IMR-90 (cell line): ENCODE measurements at regions of chr16 and their contacts with region 1.

Region 1: DNA sequence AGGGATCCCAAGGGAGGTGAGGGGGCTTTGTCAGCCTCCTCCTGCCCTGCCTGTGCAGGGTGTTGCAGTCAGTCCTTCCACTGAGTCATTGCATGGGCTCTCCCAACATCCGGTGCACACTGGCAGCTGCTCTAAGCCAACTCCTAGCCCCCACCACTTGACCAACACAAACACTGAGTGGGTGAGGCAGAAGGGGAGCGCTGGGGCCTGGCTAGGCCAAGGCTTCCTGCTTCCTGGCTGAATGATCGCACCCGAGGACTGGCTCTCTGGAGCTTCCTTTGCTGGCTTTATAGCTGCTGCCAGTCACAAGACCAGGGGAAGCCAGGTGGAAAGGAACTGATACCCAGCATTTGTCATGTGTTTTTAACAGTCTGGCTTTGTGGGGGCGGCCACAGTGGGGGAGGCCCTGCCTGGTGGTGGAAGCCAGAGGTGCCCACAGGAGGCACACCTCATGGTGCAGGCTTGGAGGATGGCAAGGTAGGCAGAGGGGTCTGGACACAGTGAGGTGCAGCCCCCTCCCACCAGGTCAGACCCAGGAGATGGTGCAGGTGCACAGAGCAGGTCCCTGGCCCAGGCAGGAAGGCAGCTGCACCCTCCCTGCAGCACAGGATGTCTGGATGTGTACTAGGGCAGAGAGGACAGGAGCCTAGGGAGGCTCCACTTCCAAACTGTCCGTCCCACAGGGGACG is 6.8 kb downstream of the MPG start:
- DNase-seq: peak; percentile 96
- ATAC-seq: peak; percentile 96
- H3K4me3 ChIP-seq: no peak overlapping the region
- H3K27ac ChIP-seq: peak overlapping the region; percentile 79
- H3K4me1 ChIP-seq: peaks cover 18% of the 10 kb centered on the region
- H3K27me3 ChIP-seq: no peaks in the 10 kb centered on the region
- CTCF ChIP-seq: no peak
- POLR2A ChIP-seq: peak; percentile 57; the same call in 1 of the 2 replicates
- RAD21 ChIP-seq: peak; percentile 24; the same call in 1 of the 2 replicates

Region 2: DNA sequence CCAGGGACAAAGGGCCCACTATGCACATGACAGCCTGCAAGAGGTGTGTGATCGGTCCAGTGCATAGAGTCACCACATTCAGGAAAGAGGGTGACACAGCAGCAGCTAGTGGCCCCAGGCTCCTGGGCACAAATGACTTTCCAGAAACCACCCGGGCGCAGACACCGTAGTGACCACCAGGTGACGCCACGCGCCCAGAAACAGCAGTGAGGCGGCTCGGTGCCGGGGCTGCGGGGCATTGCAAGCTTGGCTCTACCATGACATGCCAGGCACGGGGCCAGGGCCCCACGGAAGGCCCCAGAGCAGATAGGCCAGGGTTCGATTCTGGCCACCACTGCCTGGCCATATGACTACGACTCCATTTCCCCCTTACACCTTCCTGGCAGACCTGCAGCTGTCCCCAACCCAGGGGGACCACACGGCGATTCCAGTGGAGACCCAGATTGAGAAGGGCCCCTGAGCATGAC is 19.2 kb before region 1 on chr16:
- CTCF ChIA-PET with region 1: interaction called, 14 read pairs
- POLR2A ChIA-PET with region 1: interaction called, 4 read pairs
- dilution Hi-C with region 1: no loop called
- in situ Hi-C with region 1: no loop called
- intact Hi-C with region 1: loop called (anchors 1 kb)
- DNase-seq: peak; percentile 59
- ATAC-seq: peak; percentile 79
- H3K4me3 ChIP-seq: no peak overlapping the region
- H3K27ac ChIP-seq: no peak overlapping the region
- H3K4me1 ChIP-seq: peaks cover 38% of the 10 kb centered on the region
- H3K27me3 ChIP-seq: no peaks in the 10 kb centered on the region
- CTCF ChIP-seq: peak; percentile 99
- POLR2A ChIP-seq: 0 out of 2 replicates have a peak, but pooled peaks have one; percentile 52
- RAD21 ChIP-seq: peak; percentile 99

Region 3: DNA sequence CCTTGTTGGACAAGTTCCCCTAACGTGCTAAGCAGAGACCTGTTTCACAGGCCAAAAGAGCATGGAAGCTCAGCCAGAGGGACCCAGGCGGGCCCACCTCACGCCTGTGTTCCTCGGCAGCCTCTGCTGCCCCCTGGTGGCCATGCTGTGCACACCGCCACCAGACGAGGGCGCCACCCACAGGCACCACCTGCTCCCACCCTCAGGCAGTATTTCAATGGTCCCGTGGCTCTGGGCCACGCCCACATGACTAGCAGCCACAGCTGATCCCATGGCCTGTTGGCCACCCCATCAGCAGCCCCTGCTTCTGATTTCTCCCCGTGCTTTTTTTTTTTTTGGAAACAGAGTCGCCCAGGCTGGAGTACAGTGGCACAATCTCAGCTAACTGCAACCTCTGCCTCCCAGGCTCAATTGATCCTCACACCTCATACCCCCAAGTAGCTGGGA is 12.1 kb after region 1 on chr16:
- CTCF ChIA-PET with region 1: interaction called, 5 read pairs
- POLR2A ChIA-PET with region 1: no interaction called
- dilution Hi-C with region 1: no loop called
- in situ Hi-C with region 1: no loop called
- intact Hi-C with region 1: loop called (anchors 1 kb)
- DNase-seq: peak; percentile 83
- ATAC-seq: peak; percentile 89
- H3K4me3 ChIP-seq: no peak overlapping the region
- H3K27ac ChIP-seq: no peak overlapping the region
- H3K4me1 ChIP-seq: peaks cover 3% of the 10 kb centered on the region
- H3K27me3 ChIP-seq: no peaks in the 10 kb centered on the region
- CTCF ChIP-seq: peak; percentile 100
- POLR2A ChIP-seq: peak; percentile 56
- RAD21 ChIP-seq: peak; percentile 92